ENCODE measurements at regions of chr19 and their contacts with region 1.

Region 1: DNA sequence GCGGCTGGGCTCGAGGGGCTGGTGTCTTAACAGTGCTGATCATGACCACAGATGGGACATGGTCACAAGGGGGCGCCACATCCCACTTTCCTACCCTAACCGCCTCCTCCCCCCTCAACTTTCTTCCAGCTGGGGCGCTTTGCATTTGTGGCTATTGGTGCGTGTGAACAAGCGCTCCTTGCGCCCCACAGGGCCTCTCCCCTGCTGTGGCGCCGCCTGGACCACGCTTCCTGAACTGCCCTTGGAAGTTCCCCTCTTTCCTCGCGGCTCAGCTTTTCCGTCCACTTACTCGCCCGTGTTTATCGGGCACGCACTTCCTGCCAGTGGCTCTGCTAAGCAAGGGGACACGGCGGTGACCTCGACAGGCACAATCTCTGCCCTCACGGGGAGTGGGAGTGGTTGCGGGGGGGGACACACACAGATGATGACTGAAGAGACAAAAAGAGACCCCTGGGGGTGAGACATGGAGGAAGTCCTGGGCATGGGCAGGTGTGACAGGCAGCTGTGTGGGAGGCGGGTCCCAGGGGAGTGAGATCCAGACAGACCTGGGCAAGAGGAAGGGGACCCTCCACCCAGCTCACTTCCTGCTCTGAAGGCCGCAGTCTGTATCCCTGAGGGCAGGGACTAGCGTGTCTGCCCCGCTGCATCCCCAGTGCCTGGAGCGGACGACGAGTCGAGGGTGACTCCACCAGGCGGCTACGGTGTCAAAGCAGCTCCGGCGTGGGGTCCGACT is 40.3 kb downstream of the ZNF787 start:
- DNase-seq: peak; percentile 67
- H3K4me3 ChIP-seq: peak overlapping the region; percentile 21 to 28
- H3K27ac ChIP-seq: no peak overlapping the region
- H3K4me1 ChIP-seq: no peaks in the 10 kb centered on the region
- H3K27me3 ChIP-seq: no peaks in the 10 kb centered on the region
- CTCF ChIP-seq: peak in 3 of 4 experiments; percentile 44 to 70 (median 54)
- POLR2A ChIP-seq: no peak

Region 2: DNA sequence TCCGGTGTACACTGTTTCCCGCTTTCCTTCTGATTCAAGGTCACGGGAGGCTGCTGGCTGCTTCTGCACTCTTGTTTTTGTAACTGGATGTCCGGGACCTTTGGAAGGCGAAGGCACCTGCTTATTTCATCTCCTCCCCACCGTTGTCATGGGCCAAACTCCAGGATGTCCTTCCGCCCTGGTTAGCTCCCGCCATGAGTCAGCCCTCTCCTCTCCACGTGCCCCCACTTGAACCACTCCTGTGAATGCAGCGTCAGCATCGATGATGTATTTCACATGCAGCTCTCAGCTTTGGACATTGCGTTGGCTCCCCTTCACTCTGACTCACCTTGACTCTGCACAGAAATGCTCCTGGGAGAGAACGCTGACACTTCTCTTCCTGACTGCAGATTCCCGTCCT is 89.4 kb after region 1 on chr19:
- intact Hi-C with region 1: loop called (anchors 2 kb)
- DNase-seq: no peak
- H3K4me3 ChIP-seq: no peak overlapping the region
- H3K27ac ChIP-seq: no peak overlapping the region
- H3K4me1 ChIP-seq: no peaks in the 10 kb centered on the region
- H3K27me3 ChIP-seq: peaks cover 3% of the 10 kb centered on the region
- CTCF ChIP-seq: no peak
- POLR2A ChIP-seq: no peak

Region 3: GRCh38 chr19:56252699-56253422 is 172.0 kb after region 1 on chr19:
- intact Hi-C with region 1: loop called (anchors 10 kb)
- DNase-seq: peak; percentile 31
- H3K4me3 ChIP-seq: no peak overlapping the region
- H3K27ac ChIP-seq: no peak overlapping the region
- H3K4me1 ChIP-seq: no peaks in the 10 kb centered on the region
- H3K27me3 ChIP-seq: no peaks in the 10 kb centered on the region
- CTCF ChIP-seq: peak; percentile 49 to 79 (median 64)
- POLR2A ChIP-seq: no peak

Region 4: DNA sequence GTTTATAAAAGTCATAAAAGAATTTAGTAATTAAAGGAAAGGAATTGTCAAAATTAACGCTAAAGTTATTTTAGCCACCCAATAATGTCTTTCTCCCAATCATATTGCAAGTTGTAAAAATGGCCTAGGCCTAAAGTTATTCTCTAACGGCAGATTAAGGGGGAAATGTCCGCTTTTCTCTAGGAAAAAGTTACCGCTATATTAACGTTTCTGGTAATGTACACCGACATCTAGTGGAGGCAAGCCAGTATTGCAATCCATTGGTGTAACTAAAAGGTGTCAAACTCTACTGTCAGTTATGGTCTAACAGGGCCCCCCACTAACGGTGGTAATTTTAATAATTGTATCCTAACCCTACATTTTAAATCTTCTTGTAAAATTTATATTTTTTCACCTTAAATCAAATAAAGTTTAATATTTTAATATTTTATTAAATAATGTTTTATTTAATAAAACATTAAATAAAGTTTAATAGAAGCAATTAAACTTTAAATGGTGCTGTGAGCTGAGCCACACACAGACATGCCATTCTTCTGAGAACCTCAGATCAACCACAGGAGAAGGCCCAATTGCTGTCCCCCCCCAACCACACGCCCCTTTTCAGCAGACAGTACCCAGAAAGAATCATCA is 269.7 kb after region 1 on chr19:
- intact Hi-C with region 1: loop called (anchors 5 kb)
- DNase-seq: peak; percentile 11
- H3K4me3 ChIP-seq: no peak overlapping the region
- H3K27ac ChIP-seq: no peak overlapping the region
- H3K4me1 ChIP-seq: no peaks in the 10 kb centered on the region
- H3K27me3 ChIP-seq: no peaks in the 10 kb centered on the region
- CTCF ChIP-seq: peak; percentile 45 to 75 (median 70)
- POLR2A ChIP-seq: no peak